ENCODE measurements at regions of chr7 and their contacts with region 1.

Region 1: DNA sequence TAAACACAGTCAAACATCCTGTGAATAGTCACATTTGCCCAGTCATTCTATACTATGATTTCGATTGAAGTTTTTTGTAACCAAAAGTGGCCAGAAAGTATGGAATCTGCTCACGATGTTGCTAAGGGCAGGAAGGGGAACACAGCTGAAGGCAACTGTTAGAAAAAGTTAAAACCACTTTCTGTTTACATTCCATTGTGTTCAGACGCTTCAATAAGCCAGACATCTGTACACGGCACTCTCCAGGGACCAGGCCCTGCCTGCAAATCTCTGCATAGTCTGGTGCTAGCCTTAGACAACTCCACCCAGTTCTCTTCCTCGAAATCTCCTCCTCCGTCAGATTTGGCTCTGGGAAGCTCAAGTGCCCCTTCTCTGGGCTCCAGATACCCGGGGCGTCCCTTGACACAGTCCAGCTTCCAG is 17.1 kb upstream of the TMEM120A start:
- DNase-seq: no peak
- CTCF ChIP-seq: no peak

Region 2: DNA sequence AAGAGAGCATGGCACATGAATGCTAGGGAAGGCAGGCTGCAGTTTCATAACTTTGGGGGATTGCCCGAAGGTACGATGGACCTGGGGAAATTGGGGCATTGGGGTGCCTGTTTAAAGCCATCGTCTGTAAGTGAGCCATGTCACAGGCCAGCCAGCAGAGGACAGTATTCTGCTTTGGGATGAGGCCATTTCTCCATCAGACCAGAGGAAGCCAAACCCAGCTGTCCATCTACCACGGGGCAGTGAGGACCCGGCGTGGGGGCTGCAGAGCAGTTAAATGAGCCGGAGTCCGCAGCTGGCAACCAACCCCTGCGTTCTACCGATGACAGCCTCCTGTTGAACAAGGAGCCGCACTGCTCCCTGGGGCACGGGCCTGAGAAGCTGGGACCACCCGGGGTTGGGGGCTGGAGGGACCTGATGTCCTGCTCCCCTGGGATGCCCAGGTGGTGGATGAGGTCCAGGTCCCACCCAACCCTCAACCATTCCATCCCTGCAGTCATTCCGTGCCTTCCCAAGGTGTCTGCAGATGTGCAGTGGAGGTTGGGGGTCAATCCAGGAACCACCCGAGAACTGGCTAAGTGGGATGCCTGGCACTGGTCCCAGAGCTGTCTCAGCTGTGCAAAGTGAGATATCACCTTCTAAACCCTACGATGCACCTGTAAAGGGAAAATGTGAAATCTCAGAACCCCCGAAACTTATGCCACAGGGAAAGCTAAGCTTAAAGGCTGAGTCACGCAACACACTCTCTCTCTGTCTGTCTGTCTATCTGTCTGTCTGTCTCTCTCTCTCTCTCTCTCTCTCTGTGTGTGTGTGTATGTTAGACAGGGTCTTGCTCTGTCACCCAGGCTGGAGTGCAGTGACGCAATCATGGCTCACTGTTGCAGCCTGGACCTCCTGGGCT is 144.7 kb before region 1 on chr7:
- in situ Hi-C with region 1: loop called (anchors 10 kb)
- DNase-seq: peak; percentile 82
- CTCF ChIP-seq: peak; percentile 92

Region 3: GRCh38 chr7:76314042-76314721 is 302.7 kb after region 1 on chr7:
- in situ Hi-C with region 1: no loop called
- DNase-seq: peak; percentile 93
- CTCF ChIP-seq: peak; percentile 100

Measured in GM13977 (cell line).